HEK293T (cell line): ENCODE measurements at regions of chr4 and their contacts with region 1.

Region 1: DNA sequence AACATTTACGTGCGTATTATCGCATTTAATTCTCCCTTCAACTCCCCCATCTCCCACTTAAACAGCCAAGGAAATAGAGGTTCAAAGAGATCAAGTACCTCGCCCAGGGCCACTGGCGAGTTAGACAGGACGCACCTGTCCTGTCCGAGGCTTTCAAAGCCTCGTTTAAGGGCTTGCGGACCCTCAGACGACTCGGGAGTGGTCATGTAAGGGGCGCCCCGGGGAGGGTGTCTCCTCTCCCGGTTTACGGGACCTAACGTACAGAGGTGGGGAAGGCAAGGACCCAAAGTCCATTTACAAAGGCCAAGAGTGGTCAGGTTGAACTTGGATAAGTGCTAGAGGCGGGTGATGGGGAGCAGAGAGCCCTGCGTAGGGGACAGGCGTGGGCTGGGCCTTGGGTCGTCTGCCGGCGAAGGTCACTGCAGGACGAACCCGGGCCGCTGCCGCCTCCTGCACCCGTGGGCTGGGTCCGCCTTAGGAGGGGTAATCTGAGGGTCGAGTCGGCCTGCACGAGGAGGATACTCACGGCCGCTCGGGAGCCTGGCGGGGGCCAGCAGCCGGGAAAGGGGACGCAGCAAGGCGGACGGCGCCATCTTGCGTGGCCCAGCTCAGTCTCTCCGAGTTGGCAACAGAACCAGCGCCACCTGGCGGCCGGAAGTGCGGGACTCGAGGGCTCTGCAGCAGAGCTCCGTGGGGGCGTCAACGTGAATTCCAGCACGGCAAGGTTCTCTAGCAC is 5.9 kb upstream of the NAA15 start:
- DNase-seq: peak; percentile 88

Region 2: GRCh38 chr4:139177868-139178611 is 117.3 kb before region 1 on chr4:
- CTCF ChIA-PET with region 1: interaction called, 15 read pairs
- POLR2A ChIA-PET with region 1: interaction called, 50 read pairs
- DNase-seq: peak; percentile 88

Region 3: DNA sequence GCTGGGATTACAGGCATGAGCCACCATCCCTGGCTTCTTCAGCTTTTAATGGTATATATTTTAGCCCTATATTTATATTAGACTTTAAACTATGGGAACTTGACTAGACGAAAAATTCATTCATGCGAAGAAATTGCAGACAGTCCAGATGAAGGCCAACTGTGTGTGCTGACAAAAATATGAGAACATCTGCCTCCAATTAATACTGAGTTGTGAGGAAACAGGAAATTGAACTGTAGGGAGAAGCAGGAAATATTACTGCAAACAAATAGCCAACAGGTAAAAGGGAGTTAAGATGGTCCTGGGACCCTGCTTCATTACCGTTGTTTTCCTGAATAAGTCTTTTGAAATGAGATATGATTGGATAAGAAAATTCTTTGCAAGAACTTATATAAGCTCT is 41.7 kb before region 1 on chr4:
- CTCF ChIA-PET with region 1: interaction called, 12 read pairs
- POLR2A ChIA-PET with region 1: interaction called, 5 read pairs
- DNase-seq: no peak

Region 4: GRCh38 chr4:139279760-139280620 is 15.4 kb before region 1 on chr4 and contains the start of gene MGARP:
- CTCF ChIA-PET with region 1: interaction called, 20 read pairs
- POLR2A ChIA-PET with region 1: interaction called, 17 read pairs
- DNase-seq: peak; percentile 48

Region 5: GRCh38 chr4:139386421-139386820 is 91.0 kb after region 1 on chr4:
- CTCF ChIA-PET with region 1: no interaction called
- POLR2A ChIA-PET with region 1: no interaction called
- DNase-seq: no peak